ENCODE measurements at regions of chr22 and their contacts with region 1.

Region 1: DNA sequence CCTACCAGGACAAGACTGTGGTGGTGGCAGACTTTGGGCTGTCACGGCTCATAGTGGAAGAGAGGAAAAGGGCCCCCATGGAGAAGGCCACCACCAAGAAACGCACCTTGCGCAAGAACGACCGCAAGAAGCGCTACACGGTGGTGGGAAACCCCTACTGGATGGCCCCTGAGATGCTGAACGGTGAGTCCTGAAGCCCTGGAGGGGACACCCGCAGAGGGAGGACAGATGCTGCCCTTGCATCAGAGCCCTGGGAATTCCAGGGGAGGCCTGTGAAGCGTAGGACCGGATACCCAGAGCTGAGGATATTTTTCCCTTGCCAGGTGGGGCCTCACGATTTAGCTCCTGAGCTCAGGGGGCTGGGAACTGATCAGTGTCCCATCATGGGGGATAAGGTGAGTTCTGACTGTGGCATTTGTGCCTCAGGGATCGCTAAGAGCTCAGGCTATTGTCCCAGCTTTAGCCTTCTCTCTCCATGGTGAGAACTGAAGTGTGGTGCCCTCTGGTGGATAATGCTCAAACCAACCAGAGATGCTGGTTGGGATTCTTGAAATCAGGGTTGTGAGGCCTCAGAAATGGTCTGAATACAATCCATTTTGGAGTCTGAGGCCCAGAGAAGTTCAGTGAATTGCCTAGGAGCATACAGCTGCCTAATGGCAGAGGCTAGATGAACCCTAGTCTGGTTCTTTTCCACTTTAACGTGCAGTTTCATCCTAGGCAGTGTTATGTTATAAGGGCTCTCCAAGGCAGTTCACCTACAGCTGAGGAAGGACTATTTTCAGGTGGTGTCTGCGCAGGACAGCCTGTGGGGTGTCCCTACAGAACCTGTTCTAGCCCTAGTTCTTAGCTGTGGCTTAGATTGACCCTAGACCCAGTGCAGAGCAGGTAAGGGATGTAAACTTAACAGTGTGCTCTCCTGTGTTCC is 19.5 kb downstream of the PIK3IP1 start:
- DNase-seq: peak in 1 of 2 donors; percentile 79
- ATAC-seq: peak; percentile 60 to 74 (median 62)
- H3K4me3 ChIP-seq: no peak overlapping the region
- H3K4me3 Mint-ChIP-seq: no peak overlapping the region
- H3K27ac ChIP-seq: no peak overlapping the region
- H3K27ac Mint-ChIP-seq: no peak overlapping the region
- H3K4me1 ChIP-seq: peaks cover under 1% of the 10 kb centered on the region
- H3K4me1 Mint-ChIP-seq: peaks cover 0 to 8% of the 10 kb centered on the region in 2 donors
- H3K27me3 ChIP-seq: no peaks in the 10 kb centered on the region
- H3K27me3 Mint-ChIP-seq: no peaks in the 10 kb centered on the region
- CTCF ChIP-seq: peak; percentile 54

Region 2: DNA sequence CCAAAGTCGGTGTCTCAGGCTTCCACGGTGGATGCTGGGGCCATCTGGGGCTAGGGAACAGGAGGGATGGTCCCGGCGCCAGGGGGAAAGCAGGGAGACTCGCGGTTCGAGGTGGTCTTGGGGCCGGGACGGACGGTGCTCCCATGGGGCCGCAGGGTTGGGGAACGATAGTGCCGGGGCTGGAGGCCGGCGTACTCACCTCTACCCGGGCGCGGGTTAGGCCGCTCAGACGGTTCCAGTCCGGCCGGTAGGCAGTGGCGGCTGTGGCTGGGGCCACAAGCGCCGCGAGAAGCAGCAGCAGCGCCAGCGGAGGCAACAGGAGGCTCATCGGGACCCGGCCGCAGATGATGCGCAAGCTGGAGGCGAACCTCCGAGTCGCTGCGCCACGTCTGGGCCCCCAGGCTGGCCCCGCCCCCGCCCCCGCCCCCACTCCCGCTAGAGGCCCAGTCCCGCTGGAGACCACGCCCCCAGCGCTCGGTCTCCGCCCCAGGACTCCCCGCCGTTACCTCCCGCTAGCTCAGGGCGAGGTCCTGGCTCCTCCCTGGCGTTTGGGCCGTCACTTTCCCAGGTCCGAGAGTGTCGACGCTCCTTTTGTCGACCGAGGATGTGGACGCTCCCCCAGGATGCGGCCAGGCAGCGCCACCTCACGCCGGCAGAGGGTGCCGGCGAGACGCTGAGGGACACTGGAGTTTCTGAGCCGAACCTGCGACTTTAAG is 165.4 kb before region 1 on chr22 and contains the start of gene SELENOM:
- intact Hi-C with region 1: loop called (anchors 5 kb)
- DNase-seq: peak; percentile 80 to 94
- ATAC-seq: peak; percentile 94 to 96 (median 96)
- H3K4me3 ChIP-seq: peak within 1 kb of the TSS; percentile 86
- H3K4me3 Mint-ChIP-seq: peak within 1 kb of the TSS; percentile 87
- H3K27ac ChIP-seq: peak within 1 kb of the TSS; percentile 34
- H3K27ac Mint-ChIP-seq: peak within 1 kb of the TSS; percentile 78 to 91
- H3K4me1 ChIP-seq: peaks cover 17% of the 10 kb centered on the region
- H3K4me1 Mint-ChIP-seq: peaks cover 7 to 18% of the 10 kb centered on the region in 2 donors
- H3K27me3 ChIP-seq: no peaks in the 10 kb centered on the region
- H3K27me3 Mint-ChIP-seq: peaks cover 0 to 2% of the 10 kb centered on the region in 2 donors
- CTCF ChIP-seq: peak; percentile 74
- total RNA-seq, gene SELENOM: 8.1 to 14.0 (median 10.6) TPM

Region 3: DNA sequence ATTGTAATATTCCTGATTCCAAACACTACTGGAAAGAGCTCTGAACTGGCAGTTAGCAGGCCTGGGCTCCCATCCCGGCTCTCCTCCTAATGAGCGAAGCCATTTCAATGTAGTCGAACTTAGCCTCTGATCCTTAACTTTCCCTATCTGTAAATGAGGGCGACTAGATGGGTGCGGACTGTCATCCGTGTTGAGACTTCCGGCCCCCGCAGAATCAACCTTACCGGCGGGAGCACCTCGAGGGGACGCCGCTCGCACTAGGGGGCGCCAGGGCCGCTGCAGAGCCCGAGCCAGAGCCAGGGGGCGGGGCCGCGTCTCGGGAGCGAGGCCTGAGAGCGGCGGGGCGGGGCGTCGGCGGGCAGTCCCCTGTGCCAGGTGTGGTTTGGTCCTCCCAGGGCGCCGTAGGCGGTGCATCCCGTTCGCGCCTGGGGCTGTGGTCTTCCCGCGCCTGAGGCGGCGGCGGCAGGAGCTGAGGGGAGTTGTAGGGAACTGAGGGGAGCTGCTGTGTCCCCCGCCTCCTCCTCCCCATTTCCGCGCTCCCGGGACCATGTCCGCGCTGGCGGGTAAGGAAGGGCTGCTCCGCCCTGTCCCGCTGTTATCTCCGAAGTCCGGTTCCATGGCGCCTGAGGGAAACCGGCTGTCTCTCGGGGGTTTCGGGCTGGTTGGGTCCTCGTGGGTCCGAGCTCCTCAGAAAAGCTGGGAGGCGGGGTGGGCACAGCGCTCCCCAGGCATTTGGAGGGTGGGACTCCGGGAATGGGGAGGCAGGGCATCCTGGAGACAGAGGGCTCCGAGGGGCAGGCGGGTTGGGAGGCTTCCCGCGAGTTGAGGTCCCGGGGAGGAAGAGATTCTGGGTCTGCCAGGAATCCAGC is 60.7 kb before region 1 on chr22 and contains the start of gene LIMK2:
- intact Hi-C with region 1: loop called (anchors 1 kb)
- DNase-seq: peak; percentile 97 to 98
- ATAC-seq: peak; percentile 98 to 100 (median 99)
- H3K4me3 ChIP-seq: peak within 1 kb of the TSS; percentile 95
- H3K4me3 Mint-ChIP-seq: peak within 1 kb of the TSS; percentile 88
- H3K27ac ChIP-seq: peak within 1 kb of the TSS; percentile 61
- H3K27ac Mint-ChIP-seq: peak within 1 kb of the TSS; percentile 69 to 92
- H3K4me1 ChIP-seq: peaks cover 33% of the 10 kb centered on the region
- H3K4me1 Mint-ChIP-seq: peaks cover 33 to 47% of the 10 kb centered on the region in 2 donors
- H3K27me3 ChIP-seq: no peaks in the 10 kb centered on the region
- H3K27me3 Mint-ChIP-seq: no peaks in the 10 kb centered on the region
- CTCF ChIP-seq: peak; percentile 77
- total RNA-seq, gene LIMK2: 17.2 to 28.6 (median 19.1) TPM

Region 4: DNA sequence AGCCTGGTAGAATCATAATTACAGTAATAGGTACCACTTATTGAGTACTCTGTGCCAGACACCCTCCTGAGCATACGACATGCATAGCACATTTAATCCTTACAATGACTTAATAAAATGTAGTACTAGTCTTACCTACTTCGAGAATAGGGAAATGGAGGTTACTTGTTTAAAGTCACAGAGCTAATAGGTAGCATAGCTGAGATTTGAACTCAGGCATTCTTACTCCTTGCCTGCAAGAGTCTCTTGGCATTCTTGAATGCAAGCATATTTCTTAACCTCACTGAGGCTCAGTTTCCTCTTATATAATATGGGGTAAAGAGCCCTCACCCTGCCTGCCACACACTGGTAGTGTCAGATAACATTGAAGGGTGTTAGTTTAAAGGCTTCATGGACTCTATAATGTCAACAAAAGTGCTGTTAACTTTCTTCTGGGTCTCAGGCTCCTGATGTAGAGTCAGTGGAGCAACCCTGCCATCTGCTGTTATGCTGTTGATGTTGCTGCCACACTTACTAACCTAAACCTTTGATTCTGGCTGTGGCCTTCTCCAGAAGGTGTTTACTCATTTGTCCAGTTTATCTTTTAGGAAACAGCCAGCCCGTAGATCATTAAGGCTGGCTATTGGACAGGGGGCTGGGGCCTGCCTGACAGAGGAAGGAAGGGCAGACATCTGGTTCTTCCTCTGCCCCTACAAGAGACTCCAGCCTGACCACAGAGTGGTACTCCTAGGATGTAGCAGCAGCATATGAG is 41.7 kb before region 1 on chr22:
- intact Hi-C with region 1: no loop called
- DNase-seq: peak; percentile 45 to 84
- ATAC-seq: peak; percentile 84 to 86 (median 84)
- H3K4me3 ChIP-seq: no peak overlapping the region
- H3K4me3 Mint-ChIP-seq: peak overlapping the region; percentile 32
- H3K27ac ChIP-seq: peak overlapping the region; percentile 83
- H3K27ac Mint-ChIP-seq: peak overlapping the region; percentile 85 to 87
- H3K4me1 ChIP-seq: peaks cover 33% of the 10 kb centered on the region
- H3K4me1 Mint-ChIP-seq: peaks cover 32 to 44% of the 10 kb centered on the region in 2 donors
- H3K27me3 ChIP-seq: no peaks in the 10 kb centered on the region
- H3K27me3 Mint-ChIP-seq: no peaks in the 10 kb centered on the region
- CTCF ChIP-seq: peak; percentile 74

Measured in natural killer cell (primary cell).